ENCODE measurements at regions of chr9 and their contacts with region 1.

Region 1: GRCh38 chr9:123349691-123350480 is 6.1 kb upstream of the CRB2 start:
- DNase-seq: peak in 2 of 5 donors; percentile 47
- ATAC-seq: peak; percentile 59 to 84 (median 76)
- H3K4me3 ChIP-seq: no peak overlapping the region
- H3K27ac ChIP-seq: no peak overlapping the region
- H3K4me1 ChIP-seq: peaks cover 0 to 14% (median 3%) of the 10 kb centered on the region in 12 donors
- H3K27me3 ChIP-seq: peaks cover 0 to 28% (median 4%) of the 10 kb centered on the region in 9 donors
- CTCF ChIP-seq: peak; percentile 82 to 98 (median 94)
- POLR2A ChIP-seq: no peak

Region 2: DNA sequence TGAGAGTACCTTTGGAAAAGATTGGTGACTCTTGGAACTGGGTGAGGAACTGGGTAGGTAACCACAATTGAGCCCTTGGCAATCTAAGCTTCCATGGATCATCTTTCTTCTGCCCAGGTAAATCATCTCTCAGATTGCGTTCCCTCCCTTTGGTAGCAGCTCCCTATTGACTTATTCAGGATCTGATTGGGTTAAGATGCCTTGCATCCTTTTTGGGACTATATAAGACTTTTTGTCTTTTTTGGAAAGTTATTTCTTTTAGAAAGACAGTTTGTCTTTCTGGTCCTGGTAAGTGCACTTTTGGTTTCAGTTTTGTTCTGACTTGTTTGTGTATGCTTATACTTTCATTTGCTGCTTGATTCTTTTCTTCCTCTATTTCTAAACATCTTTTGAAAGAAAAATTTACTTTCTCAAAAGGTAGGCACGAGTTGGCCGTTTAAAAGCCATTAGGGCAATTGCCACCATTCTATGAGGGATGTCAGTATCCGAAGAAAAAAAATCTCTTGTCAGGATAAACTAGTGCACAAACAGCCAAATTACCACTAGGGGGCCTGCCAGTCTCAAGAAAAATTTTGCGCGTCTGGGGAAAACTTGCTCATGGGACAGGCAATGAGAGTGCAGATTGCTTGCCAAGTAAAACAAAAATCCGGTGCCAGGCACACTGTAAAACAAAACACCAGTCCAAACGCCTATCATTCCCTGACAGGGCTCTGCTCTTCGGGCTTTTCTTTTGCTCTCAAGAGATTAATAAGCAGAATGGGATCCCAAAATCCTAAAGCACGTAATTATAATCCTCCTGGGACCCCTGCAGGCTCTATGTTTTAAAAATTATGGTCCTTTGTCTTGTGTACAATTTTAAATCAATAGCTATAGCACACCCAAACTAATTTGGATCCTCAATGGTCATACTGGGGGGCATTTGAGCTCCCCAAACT is 885.0 kb before region 1 on chr9:
- intact Hi-C with region 1: loop called in 2 of 10 experiments (anchors 5 to 10 kb)
- DNase-seq: peak in 4 of 5 donors; percentile 66 to 72 (median 67)
- ATAC-seq: peak; percentile 69 to 85 (median 81)
- H3K4me3 ChIP-seq: peak overlapping the region in 10 of 12 donors; percentile 23 to 60 (median 48)
- H3K27ac ChIP-seq: peak overlapping the region in 3 of 12 donors; percentile 14 to 78 (median 39)
- H3K4me1 ChIP-seq: peaks cover 0 to 14% (median 5%) of the 10 kb centered on the region in 12 donors
- H3K27me3 ChIP-seq: peaks cover 0 to 16% (median 0%) of the 10 kb centered on the region in 9 donors
- CTCF ChIP-seq: peak; percentile 71 to 88 (median 82)
- POLR2A ChIP-seq: no peak

Region 3: GRCh38 chr9:123102375-123103110 is 247.3 kb before region 1 on chr9:
- intact Hi-C with region 1: loop called in 2 of 10 experiments (anchors 5 kb)
- DNase-seq: no peak
- ATAC-seq: no peak
- H3K4me3 ChIP-seq: no peak overlapping the region
- H3K27ac ChIP-seq: no peak overlapping the region
- H3K4me1 ChIP-seq: peaks cover 0 to 3% (median 0%) of the 10 kb centered on the region in 12 donors
- H3K27me3 ChIP-seq: no peaks in the 10 kb centered on the region
- CTCF ChIP-seq: peak in 6 of 12 donors; percentile 8 to 36 (median 18)
- POLR2A ChIP-seq: no peak

Region 4: GRCh38 chr9:123174887-123175518 is 174.9 kb before region 1 on chr9:
- intact Hi-C with region 1: no loop called
- DNase-seq: no peak
- ATAC-seq: no peak
- H3K4me3 ChIP-seq: no peak overlapping the region
- H3K27ac ChIP-seq: no peak overlapping the region
- H3K4me1 ChIP-seq: peaks cover 0 to 18% (median 1%) of the 10 kb centered on the region in 12 donors
- H3K27me3 ChIP-seq: no peaks in the 10 kb centered on the region
- CTCF ChIP-seq: no peak
- POLR2A ChIP-seq: no peak

Region 5: GRCh38 chr9:123234853-123235252 is 115.0 kb before region 1 on chr9:
- intact Hi-C with region 1: no loop called
- DNase-seq: no peak
- ATAC-seq: no peak
- H3K4me3 ChIP-seq: no peak overlapping the region
- H3K27ac ChIP-seq: no peak overlapping the region
- H3K4me1 ChIP-seq: peaks cover 0 to 16% (median 0%) of the 10 kb centered on the region in 12 donors
- H3K27me3 ChIP-seq: no peaks in the 10 kb centered on the region
- CTCF ChIP-seq: no peak
- POLR2A ChIP-seq: no peak

Region 6: DNA sequence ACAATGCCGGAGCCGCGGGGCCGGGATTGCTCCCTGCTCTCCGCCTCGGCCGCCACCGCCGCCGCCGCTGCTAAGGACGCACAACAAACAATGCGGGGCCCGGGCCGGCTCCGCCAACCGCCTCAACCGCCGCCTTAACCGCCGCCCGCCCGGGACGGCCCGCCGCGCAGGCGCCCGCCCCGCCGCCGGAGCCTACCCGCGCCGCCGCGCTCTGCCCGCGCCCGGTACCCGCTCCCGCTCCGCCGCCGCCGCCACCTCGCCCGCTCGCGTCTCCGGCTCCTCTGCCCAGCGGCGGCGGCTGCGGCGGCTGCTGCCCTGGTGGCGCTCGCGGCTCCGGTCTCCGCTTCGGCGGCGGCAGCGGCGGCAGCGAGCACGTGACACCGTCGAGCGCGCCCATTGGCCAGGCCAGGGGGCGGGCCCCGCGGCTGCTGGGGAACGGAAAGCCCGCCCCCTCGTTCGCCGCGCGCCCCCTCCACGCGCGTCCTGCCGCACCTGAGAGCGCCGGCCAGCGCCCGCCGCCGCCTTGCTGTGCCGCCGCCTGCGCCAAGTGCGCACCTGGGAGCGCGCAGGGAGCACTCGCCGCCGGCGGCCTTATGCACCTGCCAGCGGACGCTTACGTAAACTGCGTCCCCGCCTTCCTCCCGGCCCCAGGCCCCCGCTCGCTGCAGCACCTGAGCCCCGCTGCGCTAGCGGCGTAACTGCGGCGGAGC is 81.5 kb before region 1 on chr9 and contains the start of gene STRBP:
- intact Hi-C with region 1: loop called in 1 of 10 experiments (anchors 10 kb)
- DNase-seq: peak; percentile 92 to 95 (median 93)
- ATAC-seq: peak; percentile 94 to 98 (median 97)
- H3K4me3 ChIP-seq: peak within 1 kb of the TSS; percentile 64 to 97 (median 86)
- H3K27ac ChIP-seq: peak within 1 kb of the TSS in 11 of 12 donors; percentile 67 to 84 (median 74)
- H3K4me1 ChIP-seq: peaks cover 0 to 22% (median 5%) of the 10 kb centered on the region in 12 donors
- H3K27me3 ChIP-seq: no peaks in the 10 kb centered on the region
- CTCF ChIP-seq: peak in 2 of 12 donors; percentile 5 to 15
- POLR2A ChIP-seq: peak in 1 of 2 donors; percentile 55
- total RNA-seq, gene STRBP: 8.3 to 24.4 (median 18.7) TPM

Region 7: GRCh38 chr9:123389070-123389469 is 39.2 kb after region 1 on chr9:
- intact Hi-C with region 1: loop called in 3 of 10 experiments (anchors 1 to 5 kb)
- DNase-seq: no peak
- ATAC-seq: no peak
- H3K4me3 ChIP-seq: no peak overlapping the region
- H3K27ac ChIP-seq: no peak overlapping the region
- H3K4me1 ChIP-seq: no peaks in the 10 kb centered on the region
- H3K27me3 ChIP-seq: no peaks in the 10 kb centered on the region
- CTCF ChIP-seq: no peak
- POLR2A ChIP-seq: no peak

Measured in heart left ventricle (tissue), 16 donors.